ENCODE measurements at regions of chr11 and their contacts with region 1.

Region 1: DNA sequence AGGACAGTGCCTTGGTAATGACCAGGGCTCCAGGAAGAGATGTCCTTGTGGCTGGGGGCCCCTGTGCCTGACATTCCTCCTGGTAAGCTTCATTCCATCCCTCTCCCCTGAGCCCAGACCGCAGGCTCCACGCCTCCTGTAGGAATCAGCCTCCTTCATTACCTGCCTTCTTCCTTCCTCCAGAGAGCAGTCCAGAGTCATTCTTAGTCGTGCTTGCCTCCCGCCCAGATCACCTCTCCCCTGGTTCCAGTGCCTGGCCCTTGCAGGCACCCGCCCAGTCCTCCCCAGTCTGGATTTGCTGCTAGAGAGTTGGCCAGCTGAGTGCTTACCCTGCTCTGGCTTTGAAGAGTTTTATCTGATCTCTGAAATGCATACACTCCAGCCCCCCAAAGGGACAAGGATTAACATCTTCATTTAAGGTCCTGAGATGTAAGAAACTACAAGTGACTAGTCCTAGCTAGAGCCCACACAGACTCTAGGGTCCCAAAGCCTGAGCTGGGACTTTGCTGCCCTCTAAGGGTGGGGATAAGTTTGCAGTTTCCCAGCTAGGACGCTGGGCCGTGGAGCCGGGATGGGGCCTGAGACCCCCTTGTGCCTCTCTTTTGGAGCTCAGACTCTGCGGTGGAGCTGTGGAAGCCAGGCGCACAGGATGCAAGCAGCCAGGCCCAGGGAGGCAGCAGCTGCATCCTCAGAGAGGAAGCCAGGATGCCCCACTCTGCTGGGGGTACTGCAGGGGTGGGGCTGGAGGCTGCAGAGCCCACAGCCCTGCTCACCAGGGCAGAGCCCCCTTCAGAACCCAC is 1.6 kb downstream of the NR1H3 start:
- DNase-seq: no peak
- H3K4me3 ChIP-seq: no peak overlapping the region
- H3K27me3 ChIP-seq: no peaks in the 10 kb centered on the region
- CTCF ChIP-seq: peak; percentile 80

Region 2: GRCh38 chr11:47161134-47161854 is 98.1 kb before region 1 on chr11:
- CTCF ChIA-PET with region 1: interaction called, 10 read pairs
- POLR2A ChIA-PET with region 1: no interaction called
- DNase-seq: no peak
- H3K4me3 ChIP-seq: no peak overlapping the region
- H3K27me3 ChIP-seq: no peaks in the 10 kb centered on the region
- CTCF ChIP-seq: peak; percentile 80

Region 3: GRCh38 chr11:47176328-47177228 is 82.8 kb before region 1 on chr11 and contains the start of gene ARFGAP2:
- CTCF ChIA-PET with region 1: interaction called, 55 read pairs
- POLR2A ChIA-PET with region 1: interaction called, 3 read pairs
- DNase-seq: peak; percentile 76
- H3K4me3 ChIP-seq: peak within 1 kb of the TSS; percentile 88
- H3K27me3 ChIP-seq: no peaks in the 10 kb centered on the region
- CTCF ChIP-seq: no peak
- polyA plus RNA-seq, gene ARFGAP2: 44.8 and 58.1 TPM in 2 replicates

Region 4: DNA sequence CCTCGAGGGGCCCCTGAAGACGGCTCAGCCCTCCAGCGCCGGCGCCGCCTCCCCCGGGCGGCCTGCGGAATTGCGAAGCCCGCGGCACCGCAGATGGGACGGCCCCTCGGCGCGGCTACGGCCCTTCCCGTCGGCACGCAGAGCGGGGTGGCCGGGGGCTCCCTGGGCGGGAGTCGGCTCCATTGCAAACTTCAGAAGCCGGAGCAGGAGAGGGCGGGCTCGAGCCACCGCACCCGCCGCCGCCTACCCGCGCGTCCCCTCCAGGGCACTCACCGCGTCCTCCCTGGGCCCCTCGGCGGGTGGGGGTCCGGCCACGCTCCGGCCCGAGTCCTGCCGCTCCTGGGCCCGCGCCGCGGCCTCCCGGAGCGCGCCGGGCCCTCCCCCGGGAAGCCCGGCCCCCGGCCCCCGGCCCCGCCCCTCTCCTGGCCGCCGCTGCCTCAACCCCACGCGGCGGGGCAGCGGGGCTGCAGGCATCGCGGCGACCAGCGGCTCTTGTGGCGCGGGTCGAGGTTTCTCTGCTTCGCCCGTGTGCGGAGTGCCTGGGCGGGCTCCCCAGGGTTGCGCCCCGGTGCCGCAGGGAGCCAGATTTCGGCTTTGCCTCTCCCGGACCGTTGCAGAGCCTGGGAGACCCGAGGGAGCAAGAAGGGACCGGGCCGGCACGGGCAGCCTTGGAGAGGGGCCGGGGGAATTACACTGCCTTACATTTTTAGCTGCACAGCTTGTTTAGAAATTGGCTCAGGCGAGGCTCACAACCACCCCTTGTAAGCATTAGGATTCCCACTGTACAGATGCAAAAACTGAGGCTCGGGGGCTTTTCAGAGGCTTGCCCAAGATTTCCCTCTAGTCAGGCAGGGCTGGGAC is 73.1 kb before region 1 on chr11 and contains the start of gene PACSIN3:
- CTCF ChIA-PET with region 1: interaction called, 55 read pairs
- POLR2A ChIA-PET with region 1: no interaction called
- DNase-seq: no peak
- H3K4me3 ChIP-seq: peak within 1 kb of the TSS; percentile 78
- H3K27me3 ChIP-seq: no peaks in the 10 kb centered on the region
- CTCF ChIP-seq: no peak
- polyA plus RNA-seq, gene PACSIN3: 17.6 and 25.2 TPM in 2 replicates

Region 5: DNA sequence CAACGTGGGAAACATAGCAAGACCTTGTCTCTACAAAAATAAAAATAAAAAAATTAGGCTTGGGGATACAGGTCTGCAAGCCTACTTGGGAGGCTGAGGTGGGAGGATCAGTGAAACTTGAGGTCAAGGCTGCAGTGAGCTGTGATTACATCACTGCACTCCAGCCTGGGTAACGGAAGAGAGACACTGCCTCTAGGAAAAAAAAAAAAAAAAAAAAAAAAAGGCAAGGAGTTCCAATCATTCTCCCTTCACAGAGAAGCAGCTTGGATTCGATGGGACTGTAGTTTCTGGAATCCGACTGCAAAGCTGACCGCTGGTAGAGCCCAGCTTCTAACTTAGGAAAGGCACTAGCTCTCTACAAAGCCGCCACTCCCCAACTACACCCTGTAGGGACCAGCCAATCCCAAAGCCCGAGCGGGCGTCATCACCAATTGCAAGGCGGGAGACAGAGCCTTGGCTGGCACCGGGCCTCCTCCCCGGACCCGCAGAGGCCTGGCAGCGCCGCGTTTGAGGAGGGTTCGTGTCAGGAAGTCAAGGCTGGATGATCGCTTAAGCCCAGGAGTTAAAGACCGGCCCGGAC is 45.3 kb before region 1 on chr11:
- CTCF ChIA-PET with region 1: interaction called, 8 read pairs
- POLR2A ChIA-PET with region 1: interaction called, 10 read pairs
- DNase-seq: no peak
- H3K4me3 ChIP-seq: peak overlapping the region; percentile 69
- H3K27me3 ChIP-seq: no peaks in the 10 kb centered on the region
- CTCF ChIP-seq: no peak

Region 6: GRCh38 chr11:47248664-47249377 is 10.6 kb before region 1 on chr11 and contains the start of gene ACP2:
- CTCF ChIA-PET with region 1: interaction called, 32 read pairs
- POLR2A ChIA-PET with region 1: interaction called, 4 read pairs
- DNase-seq: no peak
- H3K4me3 ChIP-seq: peak within 1 kb of the TSS; percentile 69
- H3K27me3 ChIP-seq: no peaks in the 10 kb centered on the region
- CTCF ChIP-seq: peak; percentile 48
- polyA plus RNA-seq, gene ACP2: 24.6 and 31.1 TPM in 2 replicates

Region 7: GRCh38 chr11:47314992-47315391 is 55.6 kb after region 1 on chr11:
- CTCF ChIA-PET with region 1: no interaction called
- POLR2A ChIA-PET with region 1: no interaction called
- DNase-seq: peak; percentile 35
- H3K4me3 ChIP-seq: no peak overlapping the region
- H3K27me3 ChIP-seq: no peaks in the 10 kb centered on the region
- CTCF ChIP-seq: no peak

Region 8: DNA sequence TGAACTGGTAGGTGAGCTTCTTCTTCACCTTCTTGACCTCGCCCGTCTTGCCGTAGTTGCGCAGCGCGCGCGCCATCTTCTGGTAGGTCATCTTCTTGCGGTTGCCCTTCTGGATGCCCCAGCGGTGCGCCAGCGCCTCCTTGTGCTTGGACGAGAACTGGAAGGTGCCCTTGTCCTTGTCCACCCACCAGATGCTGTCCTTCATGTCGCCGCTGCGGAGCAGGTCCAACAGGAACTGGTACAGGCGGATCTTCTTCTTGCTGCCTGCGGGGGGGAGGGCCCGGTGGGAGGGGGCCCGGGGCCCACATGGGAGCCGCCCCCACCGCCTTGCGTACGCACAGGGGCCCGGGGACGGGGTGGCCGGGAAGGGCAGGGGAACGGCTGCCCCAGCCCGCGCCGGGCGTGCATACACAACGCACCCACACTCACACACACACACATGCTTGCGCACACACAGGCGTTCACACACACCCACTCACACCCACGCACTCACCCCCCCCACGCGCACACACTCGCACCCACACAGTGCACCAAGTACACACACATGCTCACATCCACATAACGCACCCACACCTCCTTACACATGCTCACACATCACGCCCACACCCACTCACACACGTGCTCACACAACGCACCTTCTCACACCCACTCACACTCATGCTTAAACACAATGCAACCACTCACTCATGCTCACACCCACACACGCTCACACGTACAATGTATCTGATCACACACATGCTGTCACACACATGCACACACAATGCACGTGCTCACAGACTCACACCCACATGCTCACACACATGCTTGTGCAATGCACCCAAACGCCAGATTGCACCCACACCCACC is 96.1 kb after region 1 on chr11:
- CTCF ChIA-PET with region 1: interaction called, 11 read pairs
- POLR2A ChIA-PET with region 1: no interaction called
- DNase-seq: peak; percentile 36
- H3K4me3 ChIP-seq: peak overlapping the region; percentile 29
- H3K27me3 ChIP-seq: no peaks in the 10 kb centered on the region
- CTCF ChIP-seq: peak; percentile 100